Breast epithelium (tissue), 4 donors: ENCODE measurements at regions of chr12 and their contacts with region 1.

Region 1: DNA sequence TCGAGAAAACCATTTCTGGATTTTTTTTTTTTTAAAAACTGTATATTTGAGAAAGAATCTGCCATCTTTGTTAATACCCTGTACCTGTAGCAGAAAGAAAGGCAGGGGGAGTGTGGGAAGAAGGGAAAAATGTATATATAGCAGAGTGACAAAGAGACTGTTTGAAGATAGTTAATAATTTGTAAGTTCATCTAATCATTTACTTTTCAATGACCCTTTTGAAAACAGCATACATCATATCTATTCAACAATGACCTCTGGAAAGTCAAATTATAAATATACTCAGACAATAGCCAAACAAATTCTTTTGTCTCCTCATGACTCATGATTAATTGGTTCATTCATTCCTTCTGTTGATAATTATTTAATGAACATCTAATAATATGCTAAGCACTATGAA is 10.9 kb upstream of the CPM start:
- DNase-seq: no peak
- H3K4me3 ChIP-seq: no peak overlapping the region
- H3K27ac ChIP-seq: no peak overlapping the region
- H3K4me1 ChIP-seq: no peaks in the 10 kb centered on the region
- H3K27me3 ChIP-seq: no peaks in the 10 kb centered on the region
- CTCF ChIP-seq: no peak
- POLR2A ChIP-seq: no peak

Region 2: GRCh38 chr12:68880660-68881325 is 63.1 kb before region 1 on chr12:
- intact Hi-C with region 1: loop called (anchors 2 kb)
- DNase-seq: no peak
- H3K4me3 ChIP-seq: no peak overlapping the region
- H3K27ac ChIP-seq: no peak overlapping the region
- H3K4me1 ChIP-seq: no peaks in the 10 kb centered on the region
- H3K27me3 ChIP-seq: no peaks in the 10 kb centered on the region
- CTCF ChIP-seq: no peak
- POLR2A ChIP-seq: no peak